ENCODE measurements at regions of chr12 and their contacts with region 1.

Region 1: GRCh38 chr12:56266693-56267442 is at the start of gene COQ10A:
- DNase-seq: peak; percentile 90 to 92
- H3K4me3 ChIP-seq: peak within 1 kb of the TSS; percentile 65
- H3K4me3 Mint-ChIP-seq: peak within 1 kb of the TSS; percentile 83
- H3K27ac Mint-ChIP-seq: peak within 1 kb of the TSS; percentile 61
- H3K4me1 ChIP-seq: peaks cover 12% of the 10 kb centered on the region
- H3K4me1 Mint-ChIP-seq: peaks cover 12% of the 10 kb centered on the region
- H3K27me3 ChIP-seq: no peaks in the 10 kb centered on the region
- H3K27me3 Mint-ChIP-seq: no peaks in the 10 kb centered on the region
- CTCF ChIP-seq: peak; percentile 39 to 74
- total RNA-seq, gene COQ10A: 16.7 and 18.4 TPM in 2 replicates

Region 2: GRCh38 chr12:56206457-56207166 is 60.3 kb before region 1 on chr12:
- CTCF ChIA-PET with region 1: interaction called, 11 read pairs
- POLR2A ChIA-PET with region 1: no interaction called
- intact Hi-C with region 1: no loop called
- DNase-seq: peak; percentile 72 to 77
- H3K4me3 ChIP-seq: no peak overlapping the region
- H3K4me3 Mint-ChIP-seq: no peak overlapping the region
- H3K27ac Mint-ChIP-seq: no peak overlapping the region
- H3K4me1 ChIP-seq: no peaks in the 10 kb centered on the region
- H3K4me1 Mint-ChIP-seq: no peaks in the 10 kb centered on the region
- H3K27me3 ChIP-seq: no peaks in the 10 kb centered on the region
- H3K27me3 Mint-ChIP-seq: no peaks in the 10 kb centered on the region
- CTCF ChIP-seq: peak; percentile 61 to 78

Region 3: GRCh38 chr12:56230432-56231183 is 36.3 kb before region 1 on chr12:
- CTCF ChIA-PET with region 1: interaction called, 3 read pairs
- POLR2A ChIA-PET with region 1: no interaction called
- intact Hi-C with region 1: loop called (anchors 2 kb)
- DNase-seq: peak; percentile 94 to 96
- H3K4me3 ChIP-seq: peak overlapping the region; percentile 43
- H3K4me3 Mint-ChIP-seq: peak overlapping the region; percentile 86
- H3K27ac Mint-ChIP-seq: peak overlapping the region; percentile 85
- H3K4me1 ChIP-seq: peaks cover 29% of the 10 kb centered on the region
- H3K4me1 Mint-ChIP-seq: peaks cover 25% of the 10 kb centered on the region
- H3K27me3 ChIP-seq: no peaks in the 10 kb centered on the region
- H3K27me3 Mint-ChIP-seq: no peaks in the 10 kb centered on the region
- CTCF ChIP-seq: no peak

Region 4: DNA sequence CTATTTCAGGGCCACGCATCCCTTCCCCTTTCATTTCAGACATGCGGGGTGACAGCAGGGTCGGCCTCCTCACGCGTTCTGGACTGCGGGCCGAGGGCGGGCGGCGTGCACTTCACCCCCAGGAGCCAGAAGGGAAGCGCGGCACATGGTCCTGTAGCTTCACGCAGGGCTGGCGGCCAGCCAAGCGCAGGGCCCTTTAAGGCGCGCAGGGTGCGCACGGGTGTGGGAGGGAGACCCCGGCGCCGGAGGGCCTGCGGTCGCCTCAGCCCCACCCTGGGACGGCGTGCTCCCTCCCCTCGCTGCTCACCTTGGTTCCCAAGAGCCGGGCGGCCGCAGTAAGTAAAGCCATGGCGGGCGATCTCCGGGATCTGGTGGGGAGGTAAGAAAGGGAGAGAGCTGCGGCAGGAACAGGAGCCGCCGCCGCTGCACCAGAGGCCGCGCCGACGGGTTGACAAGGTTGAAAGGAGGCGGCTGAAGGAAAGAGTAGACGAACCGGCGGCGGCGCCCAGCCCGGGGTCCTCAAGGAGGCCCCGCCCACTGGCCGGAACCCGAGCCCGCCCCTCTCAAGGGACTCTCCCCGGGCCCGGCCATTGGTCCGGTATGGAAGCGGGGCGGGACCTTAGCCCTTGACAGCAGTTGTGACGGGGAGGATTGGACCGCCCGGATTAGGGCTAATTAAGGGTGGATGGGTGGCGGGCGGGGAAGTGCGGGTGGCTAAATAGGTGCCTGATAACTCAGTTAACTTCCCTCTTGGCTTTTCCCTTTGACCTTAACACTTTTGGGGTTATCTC is 33.2 kb after region 1 on chr12 and contains the start of gene CS:
- CTCF ChIA-PET with region 1: interaction called, 3 read pairs
- POLR2A ChIA-PET with region 1: interaction called, 4 read pairs
- intact Hi-C with region 1: loop called (anchors 2 kb)
- DNase-seq: peak; percentile 99
- H3K4me3 ChIP-seq: peak within 1 kb of the TSS; percentile 63
- H3K4me3 Mint-ChIP-seq: peak within 1 kb of the TSS; percentile 94
- H3K27ac Mint-ChIP-seq: peak within 1 kb of the TSS; percentile 95
- H3K4me1 ChIP-seq: peaks cover 10% of the 10 kb centered on the region
- H3K4me1 Mint-ChIP-seq: peaks cover 17% of the 10 kb centered on the region
- H3K27me3 ChIP-seq: no peaks in the 10 kb centered on the region
- H3K27me3 Mint-ChIP-seq: no peaks in the 10 kb centered on the region
- CTCF ChIP-seq: no peak
- total RNA-seq, gene CS: 241 and 263 TPM in 2 replicates

Region 5: GRCh38 chr12:56377310-56377988 is 110.6 kb after region 1 on chr12:
- CTCF ChIA-PET with region 1: no interaction called
- POLR2A ChIA-PET with region 1: no interaction called
- intact Hi-C with region 1: no loop called
- DNase-seq: peak in 1 of 2 experiments; percentile 45
- H3K4me3 ChIP-seq: no peak overlapping the region
- H3K4me3 Mint-ChIP-seq: peak overlapping the region; percentile 4
- H3K27ac Mint-ChIP-seq: peak overlapping the region; percentile 61
- H3K4me1 ChIP-seq: peaks cover 25% of the 10 kb centered on the region
- H3K4me1 Mint-ChIP-seq: peaks cover 15% of the 10 kb centered on the region
- H3K27me3 ChIP-seq: no peaks in the 10 kb centered on the region
- H3K27me3 Mint-ChIP-seq: no peaks in the 10 kb centered on the region
- CTCF ChIP-seq: no peak

Region 6: DNA sequence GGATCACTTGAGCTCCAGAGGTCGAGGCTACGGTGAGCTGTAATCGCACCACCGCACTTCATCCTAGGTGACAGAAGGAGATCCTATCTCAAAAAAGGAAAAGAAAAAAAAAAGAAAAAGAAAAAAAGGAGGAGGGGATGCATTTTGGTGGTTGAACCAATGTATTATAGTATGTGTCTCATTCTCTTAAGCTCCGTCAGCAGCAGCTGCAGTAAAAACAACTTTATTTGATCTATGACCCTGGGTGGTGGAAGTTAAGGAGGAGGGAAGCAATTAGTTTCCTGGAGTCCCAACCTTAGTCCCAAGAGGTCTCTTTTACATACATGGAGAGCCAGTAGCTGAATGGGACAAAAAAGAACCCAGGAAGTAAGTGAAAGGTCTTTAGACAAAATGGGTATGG is 122.5 kb after region 1 on chr12:
- CTCF ChIA-PET with region 1: no interaction called
- POLR2A ChIA-PET with region 1: no interaction called
- intact Hi-C with region 1: no loop called
- DNase-seq: no peak
- H3K4me3 ChIP-seq: no peak overlapping the region
- H3K4me3 Mint-ChIP-seq: no peak overlapping the region
- H3K27ac Mint-ChIP-seq: no peak overlapping the region
- H3K4me1 ChIP-seq: no peaks in the 10 kb centered on the region
- H3K4me1 Mint-ChIP-seq: peaks cover 12% of the 10 kb centered on the region
- H3K27me3 ChIP-seq: no peaks in the 10 kb centered on the region
- H3K27me3 Mint-ChIP-seq: no peaks in the 10 kb centered on the region
- CTCF ChIP-seq: no peak

Measured in Caco-2 (cell line).